ENCODE measurements at regions of chr17 and their contacts with region 1.

Region 1: DNA sequence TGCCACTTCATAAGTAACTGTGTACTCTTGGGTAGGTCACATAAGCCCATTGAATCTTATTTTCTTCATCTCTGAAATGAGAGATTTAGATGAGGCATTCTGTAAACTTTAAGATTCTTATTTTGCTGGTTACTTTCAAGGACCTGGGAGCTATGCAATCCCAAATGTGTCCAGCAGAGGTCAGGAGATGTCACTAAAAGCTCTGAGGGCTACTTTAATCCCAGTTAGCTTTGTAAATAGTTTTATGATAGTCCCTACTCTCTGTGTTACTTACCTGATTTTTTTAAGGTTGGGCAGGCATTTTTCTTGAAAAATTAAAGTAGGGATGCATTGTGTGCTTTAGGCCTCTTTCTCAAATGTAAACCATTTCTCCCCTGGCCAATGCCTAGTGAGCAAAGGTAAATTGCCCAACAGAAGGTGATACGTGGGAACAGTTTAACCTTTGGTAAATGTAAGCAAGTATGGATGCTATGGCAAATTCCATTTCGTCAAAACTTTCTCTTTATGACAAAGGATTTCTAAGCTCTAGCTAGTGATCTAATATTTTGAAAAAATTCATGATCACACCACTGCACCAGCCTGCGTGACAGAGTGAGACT is 57.1 kb upstream of the WSB1 start:
- DNase-seq: peak; percentile 69 to 75
- H3K4me3 ChIP-seq: no peak overlapping the region
- H3K4me3 Mint-ChIP-seq: no peak overlapping the region
- H3K27ac Mint-ChIP-seq: no peak overlapping the region
- H3K4me1 ChIP-seq: peaks cover 27% of the 10 kb centered on the region
- H3K4me1 Mint-ChIP-seq: peaks cover 6% of the 10 kb centered on the region
- H3K27me3 ChIP-seq: no peaks in the 10 kb centered on the region
- H3K27me3 Mint-ChIP-seq: no peaks in the 10 kb centered on the region
- CTCF ChIP-seq: peak; percentile 89 to 94

Region 2: GRCh38 chr17:27199948-27200347 is 36.9 kb before region 1 on chr17:
- CTCF ChIA-PET with region 1: no interaction called
- POLR2A ChIA-PET with region 1: no interaction called
- intact Hi-C with region 1: loop called (anchors 5 kb)
- DNase-seq: no peak
- H3K4me3 ChIP-seq: no peak overlapping the region
- H3K4me3 Mint-ChIP-seq: no peak overlapping the region
- H3K27ac Mint-ChIP-seq: no peak overlapping the region
- H3K4me1 ChIP-seq: no peaks in the 10 kb centered on the region
- H3K4me1 Mint-ChIP-seq: peaks cover 6% of the 10 kb centered on the region
- H3K27me3 ChIP-seq: no peaks in the 10 kb centered on the region
- H3K27me3 Mint-ChIP-seq: peaks cover 5% of the 10 kb centered on the region
- CTCF ChIP-seq: no peak

Region 3: DNA sequence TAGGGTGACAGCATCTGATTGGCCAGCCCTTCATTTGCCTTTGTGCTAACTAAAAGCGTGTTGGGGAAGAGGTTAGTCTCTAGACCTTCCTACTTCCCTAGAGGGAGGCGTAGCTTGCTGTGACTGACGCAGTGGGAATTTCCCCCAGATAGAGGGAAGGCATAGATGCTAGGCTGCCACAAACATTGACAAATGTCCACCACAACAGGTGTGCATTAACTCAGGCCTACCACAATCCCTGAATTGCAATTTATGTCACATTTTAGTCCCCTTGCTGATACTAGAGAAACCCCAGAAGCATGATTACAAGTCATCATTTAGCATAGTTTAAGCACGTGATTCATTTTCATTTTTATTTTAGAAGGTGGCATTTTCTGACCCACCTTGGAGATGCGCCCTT is 19.2 kb before region 1 on chr17:
- CTCF ChIA-PET with region 1: no interaction called
- POLR2A ChIA-PET with region 1: no interaction called
- intact Hi-C with region 1: no loop called
- DNase-seq: no peak
- H3K4me3 ChIP-seq: no peak overlapping the region
- H3K4me3 Mint-ChIP-seq: no peak overlapping the region
- H3K27ac Mint-ChIP-seq: no peak overlapping the region
- H3K4me1 ChIP-seq: no peaks in the 10 kb centered on the region
- H3K4me1 Mint-ChIP-seq: no peaks in the 10 kb centered on the region
- H3K27me3 ChIP-seq: no peaks in the 10 kb centered on the region
- H3K27me3 Mint-ChIP-seq: peaks cover 3% of the 10 kb centered on the region
- CTCF ChIP-seq: no peak

Region 4: GRCh38 chr17:27293898-27294688 is 57.3 kb after region 1 on chr17 and contains the start of gene WSB1:
- CTCF ChIA-PET with region 1: interaction called, 16 read pairs
- POLR2A ChIA-PET with region 1: interaction called, 9 read pairs
- intact Hi-C with region 1: no loop called
- DNase-seq: peak; percentile 92 to 96
- H3K4me3 ChIP-seq: peak within 1 kb of the TSS; percentile 100
- H3K4me3 Mint-ChIP-seq: peak within 1 kb of the TSS; percentile 98
- H3K27ac Mint-ChIP-seq: peak within 1 kb of the TSS; percentile 97
- H3K4me1 ChIP-seq: peaks cover 13% of the 10 kb centered on the region
- H3K4me1 Mint-ChIP-seq: peaks cover 27% of the 10 kb centered on the region
- H3K27me3 ChIP-seq: no peaks in the 10 kb centered on the region
- H3K27me3 Mint-ChIP-seq: no peaks in the 10 kb centered on the region
- CTCF ChIP-seq: peak in 1 of 2 experiments; percentile 2
- total RNA-seq, gene WSB1: 149 and 157 TPM in 2 replicates

Region 5: DNA sequence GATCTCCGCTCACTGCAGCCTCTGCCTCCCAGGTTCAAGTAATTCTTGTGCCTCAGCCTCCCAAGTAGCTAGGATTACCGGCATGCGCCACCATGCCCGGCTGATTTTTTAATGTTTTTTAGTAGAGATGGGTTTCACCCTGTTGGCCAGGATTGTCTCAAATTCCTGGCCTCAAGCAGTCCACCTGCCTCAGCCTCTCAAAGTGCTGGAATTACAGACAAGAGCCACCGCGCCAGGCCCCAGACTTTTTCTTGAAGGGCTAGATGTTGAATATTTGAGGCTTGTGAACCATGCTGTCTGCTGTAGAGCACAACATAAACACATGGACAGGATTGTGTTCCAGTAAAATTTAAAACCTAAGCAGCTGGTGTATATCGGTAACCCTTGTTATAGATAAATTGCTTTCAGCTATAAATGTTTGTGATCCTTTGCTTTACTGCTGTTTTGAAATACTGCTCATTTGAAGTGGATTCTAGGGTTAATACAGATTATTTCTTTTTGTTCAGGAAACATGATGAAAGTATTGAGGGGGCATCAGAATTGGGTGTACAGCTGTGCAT is 69.5 kb after region 1 on chr17:
- CTCF ChIA-PET with region 1: no interaction called
- POLR2A ChIA-PET with region 1: no interaction called
- intact Hi-C with region 1: no loop called
- DNase-seq: no peak
- H3K4me3 ChIP-seq: no peak overlapping the region
- H3K4me3 Mint-ChIP-seq: no peak overlapping the region
- H3K27ac Mint-ChIP-seq: no peak overlapping the region
- H3K4me1 ChIP-seq: 0 out of 2 replicates have a peak, but pooled peaks cover 4% of the 10 kb centered on the region
- H3K4me1 Mint-ChIP-seq: no peaks in the 10 kb centered on the region
- H3K27me3 ChIP-seq: no peaks in the 10 kb centered on the region
- H3K27me3 Mint-ChIP-seq: no peaks in the 10 kb centered on the region
- CTCF ChIP-seq: no peak

Region 6: GRCh38 chr17:27353461-27354050 is 116.7 kb after region 1 on chr17:
- CTCF ChIA-PET with region 1: interaction called, 8 read pairs
- POLR2A ChIA-PET with region 1: no interaction called
- intact Hi-C with region 1: loop called (anchors 5 kb)
- DNase-seq: peak; percentile 94 to 96
- H3K4me3 ChIP-seq: peak overlapping the region; percentile 93
- H3K4me3 Mint-ChIP-seq: peak overlapping the region; percentile 98
- H3K27ac Mint-ChIP-seq: peak overlapping the region; percentile 99
- H3K4me1 ChIP-seq: peaks cover 9% of the 10 kb centered on the region; the same call in 1 of the 2 replicates
- H3K4me1 Mint-ChIP-seq: no peaks in the 10 kb centered on the region
- H3K27me3 ChIP-seq: no peaks in the 10 kb centered on the region
- H3K27me3 Mint-ChIP-seq: no peaks in the 10 kb centered on the region
- CTCF ChIP-seq: peak; percentile 55 to 96

Region 7: GRCh38 chr17:27430882-27431491 is 194.2 kb after region 1 on chr17:
- CTCF ChIA-PET with region 1: no interaction called
- POLR2A ChIA-PET with region 1: no interaction called
- intact Hi-C with region 1: loop called (anchors 5 kb)
- DNase-seq: peak; percentile 80 to 84
- H3K4me3 ChIP-seq: no peak overlapping the region
- H3K4me3 Mint-ChIP-seq: no peak overlapping the region
- H3K27ac Mint-ChIP-seq: no peak overlapping the region
- H3K4me1 ChIP-seq: 0 out of 2 replicates have a peak, but pooled peaks cover 7% of the 10 kb centered on the region
- H3K4me1 Mint-ChIP-seq: no peaks in the 10 kb centered on the region
- H3K27me3 ChIP-seq: 0 out of 2 replicates have a peak, but pooled peaks cover 1% of the 10 kb centered on the region
- H3K27me3 Mint-ChIP-seq: no peaks in the 10 kb centered on the region
- CTCF ChIP-seq: peak; percentile 94 to 98